CD4-positive, alpha-beta memory T cell (primary cell): ENCODE measurements at regions of chr5 and their contacts with region 1.

Region 1: GRCh38 chr5:68460147-68460798 is 244.7 kb downstream of the PIK3R1 start:
- DNase-seq: peak; percentile 49 to 59 (median 52)
- H3K4me3 ChIP-seq: no peak overlapping the region
- H3K4me3 Mint-ChIP-seq: no peak overlapping the region
- H3K27ac ChIP-seq: no peak overlapping the region
- H3K27ac Mint-ChIP-seq: peak overlapping the region in 1 of 7 donors; percentile 17
- H3K4me1 ChIP-seq: peaks cover 27% of the 10 kb centered on the region
- H3K4me1 Mint-ChIP-seq: peaks cover 11 to 21% (median 12%) of the 10 kb centered on the region in 4 donors
- H3K27me3 ChIP-seq: no peaks in the 10 kb centered on the region
- H3K27me3 Mint-ChIP-seq: no peaks in the 10 kb centered on the region

Region 2: DNA sequence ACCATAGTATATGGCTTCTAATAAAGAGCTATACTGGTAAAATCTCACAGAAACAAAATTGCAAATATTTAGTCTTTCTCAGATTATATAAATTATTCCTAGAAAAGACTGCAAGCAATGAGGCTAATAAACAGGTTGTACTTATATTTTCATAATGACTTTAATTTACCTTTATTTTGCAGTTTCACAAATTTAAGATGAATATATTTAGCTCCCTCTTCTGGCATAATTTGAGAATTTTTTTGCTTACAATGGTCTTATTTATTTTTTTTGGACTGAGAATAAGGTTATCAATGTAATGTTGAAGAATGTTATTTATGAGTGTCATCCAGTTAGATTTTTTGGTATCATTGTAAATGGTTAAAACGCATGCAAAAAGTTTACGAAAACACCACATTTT is 188.0 kb before region 1 on chr5:
- CTCF ChIA-PET with region 1: interaction called, 12 read pairs
- POLR2A ChIA-PET with region 1: interaction called, 3 read pairs
- intact Hi-C with region 1: no loop called
- DNase-seq: peak in 2 of 5 donors; percentile 44 to 50
- H3K4me3 ChIP-seq: no peak overlapping the region
- H3K4me3 Mint-ChIP-seq: peak overlapping the region in 4 of 8 donors; percentile 15 to 46 (median 22)
- H3K27ac ChIP-seq: no peak overlapping the region
- H3K27ac Mint-ChIP-seq: peak overlapping the region; percentile 56 to 99 (median 80)
- H3K4me1 ChIP-seq: peaks cover 97% of the 10 kb centered on the region
- H3K4me1 Mint-ChIP-seq: peaks cover 66 to 95% (median 81%) of the 10 kb centered on the region in 4 donors
- H3K27me3 ChIP-seq: no peaks in the 10 kb centered on the region
- H3K27me3 Mint-ChIP-seq: no peaks in the 10 kb centered on the region

Region 3: DNA sequence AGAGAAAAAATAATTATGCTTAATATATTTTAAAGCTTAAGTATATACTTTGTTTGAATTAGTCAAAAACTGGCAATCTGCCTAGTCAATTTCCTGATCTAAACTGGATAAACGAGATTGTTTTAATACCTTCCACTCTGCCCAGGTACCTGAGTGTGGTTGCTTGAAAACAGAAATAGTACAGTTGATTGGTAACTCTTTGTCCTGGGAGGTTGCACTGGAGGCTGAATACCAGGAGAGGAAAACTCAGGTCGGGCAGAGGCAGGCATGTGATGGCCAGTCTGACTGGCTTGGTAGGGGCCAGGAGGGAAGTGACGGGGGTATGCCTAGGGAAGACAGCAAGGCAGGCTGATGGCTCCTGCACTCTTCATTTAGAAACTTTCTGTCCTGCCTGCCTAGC is 164.5 kb before region 1 on chr5:
- CTCF ChIA-PET with region 1: interaction called, 10 read pairs
- POLR2A ChIA-PET with region 1: no interaction called
- intact Hi-C with region 1: no loop called
- DNase-seq: no peak
- H3K4me3 ChIP-seq: no peak overlapping the region
- H3K4me3 Mint-ChIP-seq: peak overlapping the region in 1 of 8 donors; percentile 40
- H3K27ac ChIP-seq: no peak overlapping the region
- H3K27ac Mint-ChIP-seq: peak overlapping the region; percentile 5 to 75 (median 44)
- H3K4me1 ChIP-seq: peaks cover 17% of the 10 kb centered on the region
- H3K4me1 Mint-ChIP-seq: peaks cover 26 to 41% (median 28%) of the 10 kb centered on the region in 4 donors
- H3K27me3 ChIP-seq: no peaks in the 10 kb centered on the region
- H3K27me3 Mint-ChIP-seq: no peaks in the 10 kb centered on the region

Region 4: DNA sequence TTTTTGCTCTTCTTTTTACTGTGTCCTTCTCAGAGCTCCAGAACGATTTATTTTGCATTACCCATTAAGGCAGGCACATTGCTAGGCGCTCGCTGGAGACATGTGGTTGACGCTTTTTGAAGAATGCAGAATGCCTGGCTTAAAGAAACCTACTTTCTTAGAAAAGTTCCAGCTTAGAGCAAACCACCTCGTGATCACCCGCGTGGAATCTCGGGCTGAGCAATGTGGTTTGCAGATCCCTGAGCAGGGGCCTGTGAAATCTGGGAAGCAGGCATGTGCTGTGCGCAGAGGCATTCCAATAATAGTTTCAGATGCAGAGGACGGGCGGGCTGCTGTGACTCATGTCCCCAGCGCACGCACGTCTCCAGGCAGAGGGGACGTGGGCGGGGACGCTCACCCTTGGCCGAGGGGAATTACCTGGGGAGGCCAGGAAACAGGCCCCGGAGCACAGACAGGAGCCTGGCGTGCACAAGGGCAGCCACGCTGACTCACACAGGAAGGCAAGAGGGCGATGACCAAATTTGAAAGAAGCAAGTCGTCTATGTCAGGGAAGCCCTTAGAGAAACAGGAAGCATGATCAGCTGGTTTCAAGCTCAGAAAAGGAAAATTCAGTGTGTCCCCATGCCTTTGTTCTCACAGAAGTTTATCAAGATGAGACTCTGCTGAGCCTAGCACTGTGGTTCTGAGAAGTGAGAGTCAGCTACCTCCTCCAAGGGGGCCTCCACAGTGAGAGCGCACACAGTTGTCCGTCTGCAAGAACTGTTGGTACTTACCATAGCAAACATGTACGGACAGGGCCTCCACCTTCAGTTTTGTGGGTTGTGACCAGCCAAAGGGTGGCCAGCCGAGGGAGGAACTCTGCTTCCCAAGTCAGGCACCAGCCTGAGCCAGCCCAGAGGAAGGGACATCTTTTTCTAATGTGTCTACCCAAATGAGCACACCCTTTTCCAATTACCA is 26.1 kb before region 1 on chr5:
- CTCF ChIA-PET with region 1: interaction called, 3 read pairs
- POLR2A ChIA-PET with region 1: no interaction called
- intact Hi-C with region 1: loop called (anchors 2 kb)
- DNase-seq: peak; percentile 76 to 98 (median 83)
- H3K4me3 ChIP-seq: peak overlapping the region; percentile 7 to 42
- H3K4me3 Mint-ChIP-seq: peak overlapping the region; percentile 73 to 89 (median 80)
- H3K27ac ChIP-seq: peak overlapping the region; percentile 54
- H3K27ac Mint-ChIP-seq: peak overlapping the region; percentile 88 to 95 (median 91)
- H3K4me1 ChIP-seq: peaks cover 40% of the 10 kb centered on the region
- H3K4me1 Mint-ChIP-seq: peaks cover 29 to 39% (median 36%) of the 10 kb centered on the region in 4 donors
- H3K27me3 ChIP-seq: no peaks in the 10 kb centered on the region
- H3K27me3 Mint-ChIP-seq: no peaks in the 10 kb centered on the region

Region 5: GRCh38 chr5:69007726-69008368 is 547.6 kb after region 1 on chr5:
- CTCF ChIA-PET with region 1: no interaction called
- POLR2A ChIA-PET with region 1: no interaction called
- intact Hi-C with region 1: loop called (anchors 1 kb)
- DNase-seq: peak; percentile 49 to 57 (median 54)
- H3K4me3 ChIP-seq: no peak overlapping the region
- H3K4me3 Mint-ChIP-seq: no peak overlapping the region
- H3K27ac ChIP-seq: no peak overlapping the region
- H3K27ac Mint-ChIP-seq: no peak overlapping the region
- H3K4me1 ChIP-seq: no peaks in the 10 kb centered on the region
- H3K4me1 Mint-ChIP-seq: no peaks in the 10 kb centered on the region
- H3K27me3 ChIP-seq: no peaks in the 10 kb centered on the region
- H3K27me3 Mint-ChIP-seq: peaks cover 15 to 18% of the 10 kb centered on the region in 2 donors